ENCODE measurements at regions of chr1 and their contacts with region 1.

Region 1: GRCh38 chr1:39354572-39354971 is 136.9 kb upstream of the BMP8A start:
- DNase-seq: no peak
- H3K4me3 ChIP-seq: no peak overlapping the region
- CTCF ChIP-seq: no peak
- POLR2A ChIP-seq: no peak

Region 2: DNA sequence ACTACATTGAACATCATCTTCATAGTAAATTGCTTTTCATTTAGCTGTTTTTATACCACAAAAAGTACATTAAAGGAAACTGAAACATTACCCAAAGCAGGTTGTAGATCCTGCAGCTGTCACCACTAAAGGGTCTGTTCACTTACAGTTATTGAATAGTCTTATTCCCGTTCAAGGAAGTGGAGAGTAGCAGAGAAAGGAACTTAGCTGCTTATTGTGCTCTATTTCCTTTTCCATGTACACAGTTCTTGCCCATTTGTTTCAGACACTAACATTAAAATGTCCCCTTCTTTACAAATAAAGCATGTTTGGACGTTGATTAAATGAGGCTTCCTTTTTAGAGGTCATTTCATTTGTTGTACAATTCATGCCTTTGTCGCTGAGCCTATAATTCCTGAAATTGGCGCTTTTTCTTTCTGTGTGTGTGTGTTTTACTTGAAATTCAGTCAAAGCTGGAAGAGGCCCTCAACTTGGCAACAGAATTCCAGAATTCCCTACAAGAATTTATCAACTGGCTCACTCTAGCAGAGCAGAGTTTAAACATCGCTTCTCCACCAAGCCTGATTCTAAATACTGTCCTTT is 92.5 kb after region 1 on chr1:
- intact Hi-C with region 1: loop called (anchors 10 kb)
- DNase-seq: no peak
- H3K4me3 ChIP-seq: no peak overlapping the region
- CTCF ChIP-seq: no peak
- POLR2A ChIP-seq: no peak

Region 3: DNA sequence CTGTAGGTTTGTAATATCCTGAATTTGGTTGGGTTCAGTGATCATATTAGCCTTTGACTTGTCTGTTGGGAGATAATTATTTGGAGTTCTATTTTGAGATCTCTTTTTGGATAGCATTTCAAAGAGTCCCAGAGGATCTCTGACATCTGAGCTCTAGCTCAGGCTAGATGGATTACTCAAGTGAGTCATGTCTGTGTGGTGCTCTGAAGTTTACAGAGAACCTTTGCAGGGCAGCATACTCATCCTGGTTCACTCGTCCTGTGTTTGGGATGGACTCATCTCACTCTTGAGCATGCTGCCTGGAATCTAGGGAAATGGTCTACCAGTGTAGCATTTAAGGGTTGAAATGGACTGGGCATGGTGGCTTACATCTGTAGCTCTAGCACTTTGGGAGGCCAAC is 107.5 kb after region 1 on chr1:
- intact Hi-C with region 1: no loop called
- DNase-seq: no peak
- H3K4me3 ChIP-seq: no peak overlapping the region
- CTCF ChIP-seq: no peak
- POLR2A ChIP-seq: no peak